B cell (primary cell): ENCODE measurements at regions of chr1 and their contacts with region 1.

Region 1: DNA sequence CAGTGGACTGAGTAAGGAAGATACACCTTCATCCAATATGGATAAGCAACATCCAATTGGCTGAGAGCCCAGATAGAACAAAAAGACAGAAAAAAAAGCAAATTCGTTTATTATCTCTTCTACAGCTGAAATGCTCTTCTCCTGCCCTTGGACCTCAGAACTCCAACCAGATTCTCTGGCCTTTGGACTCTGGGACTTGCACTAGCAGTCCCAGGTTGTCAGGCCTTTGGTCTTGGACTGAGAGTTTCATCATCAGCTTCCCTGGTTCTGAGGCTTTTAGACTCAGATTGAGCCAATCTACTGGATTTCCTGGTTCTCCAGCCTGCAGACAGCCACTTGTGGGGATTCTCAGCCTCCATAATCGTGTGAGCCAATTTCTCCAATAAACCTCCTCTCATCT is 926.8 kb downstream of the PLA2G4A start:
- DNase-seq: no peak
- ATAC-seq: no peak
- H3K4me3 ChIP-seq: no peak overlapping the region
- H3K4me3 Mint-ChIP-seq: no peak overlapping the region
- H3K27ac ChIP-seq: no peak overlapping the region
- H3K27ac Mint-ChIP-seq: no peak overlapping the region
- H3K4me1 ChIP-seq: no peaks in the 10 kb centered on the region
- H3K4me1 Mint-ChIP-seq: no peaks in the 10 kb centered on the region
- H3K27me3 ChIP-seq: no peaks in the 10 kb centered on the region
- H3K27me3 Mint-ChIP-seq: no peaks in the 10 kb centered on the region
- CTCF ChIP-seq: no peak

Region 2: DNA sequence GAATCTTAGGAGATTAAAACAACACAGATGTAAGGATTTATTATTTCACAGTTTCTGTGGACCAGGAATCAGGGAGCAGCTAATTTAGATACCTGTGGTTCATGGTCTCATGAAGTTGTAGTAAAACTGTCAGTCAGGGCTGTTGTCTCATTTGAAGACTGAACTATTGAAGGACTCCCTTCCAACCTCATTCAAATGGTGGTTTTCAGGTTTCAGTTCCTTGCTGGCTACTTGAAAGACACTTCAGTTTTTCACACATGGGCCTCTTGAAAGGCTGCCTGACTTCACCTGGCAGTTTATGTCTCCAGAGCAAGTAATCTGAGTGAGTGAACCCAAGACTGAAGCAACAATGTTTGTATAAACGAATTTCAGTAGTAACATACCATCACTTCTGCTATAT is 10.9 kb before region 1 on chr1:
- CTCF ChIA-PET with region 1: no interaction called
- POLR2A ChIA-PET with region 1: no interaction called
- intact Hi-C with region 1: loop called (anchors 1 kb)
- DNase-seq: no peak
- ATAC-seq: no peak
- H3K4me3 ChIP-seq: no peak overlapping the region
- H3K4me3 Mint-ChIP-seq: no peak overlapping the region
- H3K27ac ChIP-seq: no peak overlapping the region
- H3K27ac Mint-ChIP-seq: no peak overlapping the region
- H3K4me1 ChIP-seq: no peaks in the 10 kb centered on the region
- H3K4me1 Mint-ChIP-seq: no peaks in the 10 kb centered on the region
- H3K27me3 ChIP-seq: no peaks in the 10 kb centered on the region
- H3K27me3 Mint-ChIP-seq: no peaks in the 10 kb centered on the region
- CTCF ChIP-seq: no peak